ENCODE measurements at regions of chr2 and their contacts with region 1.

Region 1: DNA sequence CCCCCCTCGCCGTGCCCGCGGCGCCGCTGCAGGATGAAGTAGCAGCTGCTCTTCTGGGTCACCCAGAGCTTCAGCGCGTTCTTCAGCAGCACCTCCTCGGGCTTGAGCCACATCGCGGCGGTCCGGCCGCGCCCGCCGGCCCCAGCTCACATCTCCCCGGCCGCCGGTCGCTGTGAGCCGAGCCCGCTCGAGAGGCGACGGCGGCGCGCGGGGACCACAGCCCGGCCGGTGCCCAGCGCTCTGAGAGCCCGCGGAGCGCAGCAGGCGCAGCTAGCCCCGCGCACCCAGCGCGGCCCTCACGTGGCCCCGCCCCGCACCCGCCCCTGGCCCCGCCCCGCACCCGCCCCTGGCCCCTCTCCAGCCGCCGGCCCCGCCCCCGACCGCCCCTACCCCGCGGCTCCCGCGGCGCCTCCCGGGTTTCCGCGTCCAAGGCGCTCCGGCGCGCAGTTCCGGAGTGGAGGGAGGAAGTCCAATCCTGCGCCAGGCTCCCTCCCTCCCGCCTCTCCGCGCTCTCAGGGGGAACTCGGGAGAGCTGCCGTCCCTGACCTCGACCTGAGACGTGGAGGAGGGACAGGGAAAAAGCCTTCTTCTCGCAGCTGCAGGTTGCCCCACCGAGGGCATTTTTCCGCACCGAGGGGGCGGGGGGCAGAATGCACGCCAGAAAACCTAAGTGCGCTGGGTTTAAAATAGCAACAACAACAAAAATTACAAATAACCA is at the start of gene TBC1D8:
- DNase-seq: peak; percentile 74
- H3K4me3 ChIP-seq: peak within 1 kb of the TSS; percentile 76 to 83 (median 82)
- H3K27ac ChIP-seq: peak within 1 kb of the TSS; percentile 55
- H3K4me1 ChIP-seq: peaks cover 25% of the 10 kb centered on the region
- H3K27me3 ChIP-seq: no peaks in the 10 kb centered on the region
- CTCF ChIP-seq: no peak
- total RNA-seq, gene TBC1D8: 9.0 to 19.2 TPM

Region 2: DNA sequence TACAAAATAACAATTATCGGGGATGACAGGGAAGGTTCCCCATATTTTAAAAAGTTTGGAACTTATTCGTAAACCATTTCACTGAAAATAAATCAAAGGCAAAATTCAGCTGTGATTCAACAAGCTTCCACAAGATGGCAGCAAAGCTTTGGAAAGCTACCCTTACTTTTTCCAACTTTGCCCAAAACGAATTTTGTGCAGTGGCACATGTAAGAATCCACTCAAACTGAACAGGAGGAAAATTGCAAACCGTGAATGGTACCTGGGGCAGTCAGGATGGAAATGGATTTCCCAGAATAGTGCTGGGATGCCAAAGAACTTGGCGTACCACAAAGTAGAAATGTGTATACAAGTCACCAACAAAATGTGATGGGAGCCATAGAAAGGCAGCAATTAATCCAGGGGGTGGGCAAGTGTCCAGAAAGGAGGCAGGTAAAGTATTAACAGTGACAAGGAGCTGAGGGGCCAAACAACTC is 138.6 kb before region 1 on chr2:
- CTCF ChIA-PET with region 1: interaction called, 4 read pairs
- dilution Hi-C with region 1: no loop called
- in situ Hi-C with region 1: no loop called
- intact Hi-C with region 1: loop called (anchors 1 kb)
- DNase-seq: peak; percentile 20
- H3K4me3 ChIP-seq: no peak overlapping the region
- H3K27ac ChIP-seq: no peak overlapping the region
- H3K4me1 ChIP-seq: no peaks in the 10 kb centered on the region
- H3K27me3 ChIP-seq: no peaks in the 10 kb centered on the region
- CTCF ChIP-seq: peak; percentile 76

Region 3: GRCh38 chr2:101113396-101114267 is 37.7 kb before region 1 on chr2:
- CTCF ChIA-PET with region 1: no interaction called
- dilution Hi-C with region 1: no loop called
- in situ Hi-C with region 1: no loop called
- intact Hi-C with region 1: loop called (anchors 1 kb)
- DNase-seq: peak; percentile 93
- H3K4me3 ChIP-seq: no peak overlapping the region
- H3K27ac ChIP-seq: peak overlapping the region; percentile 71
- H3K4me1 ChIP-seq: peaks cover 37% of the 10 kb centered on the region
- H3K27me3 ChIP-seq: no peaks in the 10 kb centered on the region
- CTCF ChIP-seq: no peak

Region 4: GRCh38 chr2:101197215-101197745 is 46.0 kb after region 1 on chr2:
- CTCF ChIA-PET with region 1: no interaction called
- dilution Hi-C with region 1: no loop called
- in situ Hi-C with region 1: no loop called
- intact Hi-C with region 1: loop called (anchors 2 kb)
- DNase-seq: no peak
- H3K4me3 ChIP-seq: no peak overlapping the region
- H3K27ac ChIP-seq: no peak overlapping the region
- H3K4me1 ChIP-seq: peaks cover 23% of the 10 kb centered on the region
- H3K27me3 ChIP-seq: no peaks in the 10 kb centered on the region
- CTCF ChIP-seq: peak in 1 of 2 donors; percentile 29

Region 5: DNA sequence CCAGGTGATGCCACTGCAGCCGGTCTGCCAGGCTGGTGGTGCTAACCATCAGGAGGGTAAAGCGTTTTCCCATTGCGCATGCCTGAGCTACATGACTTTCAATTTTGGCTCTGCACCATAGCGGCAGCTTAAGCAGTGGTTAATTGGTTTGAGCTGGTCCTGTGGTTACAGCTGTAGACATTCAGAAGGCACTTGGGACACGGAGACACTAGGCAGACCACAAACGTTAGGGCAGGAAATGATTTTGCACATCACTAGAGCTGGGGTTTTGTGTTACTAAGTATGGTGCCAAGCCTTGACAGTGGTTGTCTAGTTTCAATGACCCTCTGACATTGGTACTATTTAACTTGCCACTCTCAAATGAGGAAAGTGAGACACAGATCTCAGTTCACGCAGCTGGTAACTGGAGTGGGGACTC is 72.5 kb after region 1 on chr2:
- CTCF ChIA-PET with region 1: no interaction called
- dilution Hi-C with region 1: no loop called
- in situ Hi-C with region 1: loop called in 1 of 2 experiments (anchors 10 kb)
- intact Hi-C with region 1: no loop called
- DNase-seq: no peak
- H3K4me3 ChIP-seq: no peak overlapping the region
- H3K27ac ChIP-seq: no peak overlapping the region
- H3K4me1 ChIP-seq: no peaks in the 10 kb centered on the region
- H3K27me3 ChIP-seq: no peaks in the 10 kb centered on the region
- CTCF ChIP-seq: no peak

Measured in mammary epithelial cell (primary cell).